ENCODE measurements at regions of chr1 and their contacts with region 1.

Region 1: GRCh38 chr1:31955917-31956736 is 18.0 kb upstream of the PTP4A2 start:
- DNase-seq: peak; percentile 95
- H3K4me3 Mint-ChIP-seq: peak overlapping the region; percentile 40
- H3K27ac Mint-ChIP-seq: peak overlapping the region; percentile 90
- H3K4me1 Mint-ChIP-seq: peaks cover 75% of the 10 kb centered on the region
- H3K27me3 Mint-ChIP-seq: no peaks in the 10 kb centered on the region

Region 2: GRCh38 chr1:31587720-31588394 is 368.3 kb before region 1 on chr1:
- CTCF ChIA-PET with region 1: no interaction called
- intact Hi-C with region 1: no loop called
- DNase-seq: peak; percentile 67
- H3K4me3 Mint-ChIP-seq: no peak overlapping the region
- H3K27ac Mint-ChIP-seq: no peak overlapping the region
- H3K4me1 Mint-ChIP-seq: peaks cover 2% of the 10 kb centered on the region
- H3K27me3 Mint-ChIP-seq: peaks cover 14% of the 10 kb centered on the region

Region 3: GRCh38 chr1:31644560-31645273 is 311.4 kb before region 1 on chr1 and contains the start of gene PEF1:
- CTCF ChIA-PET with region 1: no interaction called
- intact Hi-C with region 1: loop called (anchors 10 kb)
- DNase-seq: peak; percentile 100
- H3K4me3 Mint-ChIP-seq: peak within 1 kb of the TSS; percentile 97
- H3K27ac Mint-ChIP-seq: peak within 1 kb of the TSS; percentile 100
- H3K4me1 Mint-ChIP-seq: peaks cover 17% of the 10 kb centered on the region
- H3K27me3 Mint-ChIP-seq: no peaks in the 10 kb centered on the region
- total RNA-seq, gene PEF1: 79.6 to 80.6 TPM

Region 4: DNA sequence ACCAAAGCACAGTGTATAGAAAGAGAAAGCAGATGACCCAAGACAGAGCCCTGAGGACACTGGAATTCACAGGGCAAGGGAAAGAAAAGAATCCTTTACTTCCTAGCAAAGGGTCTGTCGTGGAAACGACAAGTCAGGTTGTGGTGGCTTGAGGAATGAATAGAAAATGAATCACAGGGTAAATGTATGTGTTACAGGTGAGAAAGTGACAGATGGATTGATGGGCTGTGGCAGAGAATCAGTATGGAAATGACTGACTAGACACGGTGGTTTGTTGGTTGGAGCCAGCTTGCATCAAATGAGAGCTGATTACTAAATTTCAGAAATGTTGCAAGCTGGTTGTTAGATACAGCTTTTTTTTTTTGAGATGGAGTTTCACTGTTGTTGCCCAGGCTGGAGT is 64.8 kb before region 1 on chr1:
- CTCF ChIA-PET with region 1: no interaction called
- intact Hi-C with region 1: loop called (anchors 1 kb)
- DNase-seq: peak; percentile 81
- H3K4me3 Mint-ChIP-seq: no peak overlapping the region
- H3K27ac Mint-ChIP-seq: peak overlapping the region; percentile 90
- H3K4me1 Mint-ChIP-seq: peaks cover 38% of the 10 kb centered on the region
- H3K27me3 Mint-ChIP-seq: no peaks in the 10 kb centered on the region

Region 5: DNA sequence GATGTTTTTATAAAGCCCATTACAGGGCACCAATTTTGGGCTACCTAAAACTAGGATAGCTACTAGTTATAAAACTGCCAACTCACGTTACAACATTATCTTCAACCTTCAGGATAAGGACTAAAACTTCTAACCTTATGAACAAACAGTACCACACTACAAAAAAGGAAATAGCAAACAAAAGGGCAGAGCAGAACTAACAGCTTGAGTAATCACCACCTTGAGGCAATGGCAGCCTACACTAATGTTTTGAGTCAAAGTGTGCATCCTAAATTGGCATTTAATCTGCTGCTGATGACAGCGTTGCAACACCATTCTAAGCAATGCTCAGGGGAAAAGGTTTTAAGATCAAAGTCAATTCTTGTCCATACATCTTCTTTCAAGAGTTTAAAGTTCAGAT is 45.2 kb before region 1 on chr1:
- CTCF ChIA-PET with region 1: interaction called, 6 read pairs
- intact Hi-C with region 1: loop called (anchors 1 kb)
- DNase-seq: peak; percentile 69
- H3K4me3 Mint-ChIP-seq: peak overlapping the region; percentile 9
- H3K27ac Mint-ChIP-seq: peak overlapping the region; percentile 74
- H3K4me1 Mint-ChIP-seq: peaks cover 58% of the 10 kb centered on the region
- H3K27me3 Mint-ChIP-seq: no peaks in the 10 kb centered on the region

Region 6: DNA sequence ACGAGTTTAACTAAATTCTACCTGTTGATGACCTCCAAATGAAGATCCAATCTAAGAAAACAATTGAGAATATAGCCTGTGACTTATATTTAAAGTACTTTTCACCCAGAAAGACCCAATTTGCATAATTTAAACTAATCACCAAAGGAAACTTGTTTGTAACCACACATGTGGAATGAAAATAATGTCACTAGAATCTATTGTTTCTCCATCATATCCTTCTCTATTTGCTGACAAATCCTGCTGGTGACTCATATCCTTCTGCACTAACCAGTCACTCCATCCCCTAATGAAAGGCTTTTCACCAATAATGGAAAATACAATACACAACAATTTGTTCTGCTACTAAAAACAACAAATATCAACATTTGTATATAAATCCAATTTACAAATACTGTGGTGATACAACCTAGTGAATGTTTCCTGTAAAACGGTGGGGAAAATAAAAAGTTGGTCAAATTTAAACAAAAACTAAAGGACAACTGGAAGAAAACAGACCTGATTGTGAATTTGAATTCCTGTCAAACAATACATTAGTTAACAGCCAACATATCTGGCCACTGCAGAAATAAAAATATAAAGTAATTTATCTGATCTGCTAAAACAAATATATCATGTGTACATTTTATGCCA is 24.4 kb before region 1 on chr1:
- CTCF ChIA-PET with region 1: interaction called, 11 read pairs
- intact Hi-C with region 1: loop called (anchors 1 kb)
- DNase-seq: no peak
- H3K4me3 Mint-ChIP-seq: peak overlapping the region; percentile 62
- H3K27ac Mint-ChIP-seq: peak overlapping the region; percentile 99
- H3K4me1 Mint-ChIP-seq: peaks cover 81% of the 10 kb centered on the region
- H3K27me3 Mint-ChIP-seq: no peaks in the 10 kb centered on the region

Region 7: DNA sequence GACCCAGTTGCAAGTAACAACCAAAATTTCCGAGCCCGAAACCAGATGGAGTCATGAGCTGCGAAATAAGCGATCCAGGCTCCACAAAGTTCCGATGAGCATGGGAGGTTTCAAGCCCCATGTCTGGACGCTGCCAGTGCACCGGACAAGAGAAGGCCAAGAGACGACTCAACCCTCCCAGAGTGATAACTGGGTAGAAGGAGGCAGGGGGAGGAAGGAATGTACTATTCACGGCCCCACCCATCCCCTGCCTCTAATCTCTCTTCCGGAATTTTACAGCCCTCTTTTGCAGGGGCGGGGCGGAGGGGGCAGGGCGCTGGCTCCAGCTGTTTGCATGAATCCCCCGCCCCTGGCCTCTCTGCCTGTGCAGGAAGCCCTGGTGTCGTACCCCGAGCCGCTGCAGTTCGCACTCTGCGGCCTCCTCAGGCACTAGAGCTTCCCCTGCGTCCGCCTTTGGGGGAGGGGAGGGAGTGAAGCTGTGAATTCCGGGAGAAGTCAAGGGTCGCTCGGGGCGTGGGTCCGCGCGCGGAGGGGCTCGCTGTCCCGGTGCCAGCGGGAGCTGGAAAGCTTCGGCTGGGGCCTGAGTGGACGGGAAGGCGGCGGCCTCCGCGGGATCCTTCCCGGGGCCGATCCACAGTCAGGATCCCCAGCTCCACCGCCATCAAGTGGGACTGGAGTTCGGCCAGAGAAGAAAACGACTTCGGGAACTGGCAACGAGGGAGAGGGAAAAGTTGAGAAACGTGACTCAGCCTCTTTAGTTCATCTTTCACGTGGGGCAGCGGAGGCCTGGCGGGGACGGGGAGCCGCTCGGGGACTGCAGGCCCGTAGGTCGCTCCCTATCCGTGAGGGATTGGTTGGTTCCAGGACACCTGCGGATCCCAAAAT is 11.7 kb before region 1 on chr1:
- CTCF ChIA-PET with region 1: interaction called, 167 read pairs
- intact Hi-C with region 1: loop called (anchors 1 kb)
- DNase-seq: peak; percentile 91
- H3K4me3 Mint-ChIP-seq: peak overlapping the region; percentile 74
- H3K27ac Mint-ChIP-seq: peak overlapping the region; percentile 88
- H3K4me1 Mint-ChIP-seq: peaks cover 66% of the 10 kb centered on the region
- H3K27me3 Mint-ChIP-seq: no peaks in the 10 kb centered on the region